Heart left ventricle (tissue), 16 donors: ENCODE measurements at regions of chr6 and their contacts with region 1.

Region 1: GRCh38 chr6:116779573-116780164 is 14.2 kb upstream of the FAM162B start:
- DNase-seq: no peak
- ATAC-seq: no peak
- H3K4me3 ChIP-seq: peak overlapping the region in 3 of 12 donors; percentile 8 to 32 (median 14)
- H3K27ac ChIP-seq: no peak overlapping the region
- H3K4me1 ChIP-seq: no peaks in the 10 kb centered on the region
- H3K27me3 ChIP-seq: peaks cover 0 to 6% (median 0%) of the 10 kb centered on the region in 9 donors
- CTCF ChIP-seq: peak; percentile 17 to 62 (median 40)
- POLR2A ChIP-seq: no peak

Region 2: GRCh38 chr6:116279260-116280063 is 500.2 kb before region 1 on chr6 and contains the start of gene TSPYL1:
- intact Hi-C with region 1: no loop called
- DNase-seq: peak; percentile 97 to 98 (median 97)
- ATAC-seq: peak; percentile 97 to 98 (median 98)
- H3K4me3 ChIP-seq: peak within 1 kb of the TSS; percentile 73 to 97 (median 88)
- H3K27ac ChIP-seq: peak within 1 kb of the TSS; percentile 89 to 99 (median 97)
- H3K4me1 ChIP-seq: peaks cover 8 to 70% (median 55%) of the 10 kb centered on the region in 12 donors
- H3K27me3 ChIP-seq: no peaks in the 10 kb centered on the region
- CTCF ChIP-seq: peak in 1 of 12 donors; percentile 14
- POLR2A ChIP-seq: peak; percentile 91 to 99
- total RNA-seq, gene TSPYL1: 81.5 to 150 (median 103) TPM

Region 3: DNA sequence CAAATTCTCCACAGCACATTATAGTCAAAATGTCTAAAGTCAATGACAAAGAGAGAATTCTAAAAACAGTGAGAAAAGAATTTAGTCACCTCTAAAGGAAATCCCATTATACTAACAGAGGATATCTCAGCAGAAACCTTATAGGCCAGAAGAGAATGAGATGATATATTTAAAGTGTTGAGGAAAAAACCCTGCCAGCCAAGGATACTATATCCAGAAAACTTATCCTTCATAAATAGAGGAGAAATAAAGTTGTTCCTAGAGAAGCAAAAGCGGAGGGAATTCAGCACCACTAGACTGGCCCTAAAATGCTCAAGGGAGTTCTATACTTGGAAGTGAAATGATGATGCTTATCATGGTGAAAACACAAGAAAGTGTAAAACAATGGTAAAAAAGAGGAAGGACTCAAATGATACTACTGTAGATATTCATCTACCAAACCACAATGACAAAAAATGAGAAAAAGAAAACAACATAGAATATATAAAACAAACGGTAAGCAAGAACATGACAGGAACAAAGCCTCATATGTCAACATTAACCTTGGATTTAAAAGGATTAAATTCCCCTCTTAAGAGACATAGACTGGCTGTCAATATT is 32.5 kb after region 1 on chr6:
- intact Hi-C with region 1: no loop called
- DNase-seq: no peak
- ATAC-seq: no peak
- H3K4me3 ChIP-seq: no peak overlapping the region
- H3K27ac ChIP-seq: no peak overlapping the region
- H3K4me1 ChIP-seq: no peaks in the 10 kb centered on the region
- H3K27me3 ChIP-seq: no peaks in the 10 kb centered on the region
- CTCF ChIP-seq: no peak
- POLR2A ChIP-seq: no peak

Region 4: GRCh38 chr6:116847227-116847626 is 67.6 kb after region 1 on chr6:
- intact Hi-C with region 1: loop called in 2 of 10 experiments (anchors 5 to 10 kb)
- DNase-seq: no peak
- ATAC-seq: no peak
- H3K4me3 ChIP-seq: no peak overlapping the region
- H3K27ac ChIP-seq: no peak overlapping the region
- H3K4me1 ChIP-seq: no peaks in the 10 kb centered on the region
- H3K27me3 ChIP-seq: no peaks in the 10 kb centered on the region
- CTCF ChIP-seq: peak in 7 of 12 donors; percentile 10 to 50 (median 34)
- POLR2A ChIP-seq: no peak

Region 5: GRCh38 chr6:116902629-116903028 is 123.0 kb after region 1 on chr6:
- intact Hi-C with region 1: no loop called
- DNase-seq: no peak
- ATAC-seq: no peak
- H3K4me3 ChIP-seq: no peak overlapping the region
- H3K27ac ChIP-seq: no peak overlapping the region
- H3K4me1 ChIP-seq: no peaks in the 10 kb centered on the region
- H3K27me3 ChIP-seq: no peaks in the 10 kb centered on the region
- CTCF ChIP-seq: no peak
- POLR2A ChIP-seq: no peak

Region 6: GRCh38 chr6:116963972-116964371 is 184.3 kb after region 1 on chr6:
- intact Hi-C with region 1: loop called in 6 of 10 experiments (anchors 5 to 10 kb)
- DNase-seq: no peak
- ATAC-seq: no peak
- H3K4me3 ChIP-seq: no peak overlapping the region
- H3K27ac ChIP-seq: no peak overlapping the region
- H3K4me1 ChIP-seq: no peaks in the 10 kb centered on the region
- H3K27me3 ChIP-seq: peaks cover 0 to 2% (median 0%) of the 10 kb centered on the region in 9 donors
- CTCF ChIP-seq: no peak
- POLR2A ChIP-seq: no peak

Region 7: GRCh38 chr6:117317261-117317660 is 537.6 kb after region 1 on chr6:
- intact Hi-C with region 1: loop called in 4 of 10 experiments (anchors 5 to 10 kb)
- DNase-seq: no peak
- ATAC-seq: no peak
- H3K4me3 ChIP-seq: no peak overlapping the region
- H3K27ac ChIP-seq: no peak overlapping the region
- H3K4me1 ChIP-seq: no peaks in the 10 kb centered on the region
- H3K27me3 ChIP-seq: no peaks in the 10 kb centered on the region
- CTCF ChIP-seq: peak in 11 of 12 donors; percentile 10 to 55 (median 41)
- POLR2A ChIP-seq: no peak